ENCODE measurements at regions of chr2 and their contacts with region 1.

Region 1: DNA sequence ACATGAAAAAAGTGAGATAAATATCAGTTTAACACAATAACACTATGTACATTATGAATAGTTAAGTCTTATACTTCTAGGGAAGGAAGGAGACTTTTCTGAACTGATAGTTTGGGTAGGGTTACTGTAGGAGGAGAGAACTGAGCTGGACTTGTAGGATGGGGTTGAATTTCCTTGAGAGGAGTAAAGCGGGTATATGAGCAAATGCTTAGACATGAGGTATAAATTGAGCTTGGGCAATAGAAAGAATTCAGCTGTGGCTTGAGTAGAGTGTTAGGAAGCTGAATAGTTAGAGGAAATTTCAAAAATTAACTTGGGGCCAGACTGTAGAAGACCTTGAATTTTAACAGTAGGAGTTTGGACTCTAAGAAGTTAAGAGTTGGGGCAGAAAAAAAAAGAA is 45.1 kb downstream of the LCLAT1 start:
- DNase-seq: no peak

Region 2: GRCh38 chr2:30691948-30692828 is 200.0 kb after region 1 on chr2:
- intact Hi-C with region 1: loop called in 1 of 2 experiments (anchors 10 kb)
- DNase-seq: peak; percentile 72

Measured in posterior vena cava (tissue), 2 donors.